Endothelial cell of umbilical vein (primary cell): ENCODE measurements at regions of chr9 and their contacts with region 1.

Region 1: GRCh38 chr9:94213511-94214124 is 45.5 kb upstream of the ZNF169 start:
- DNase-seq: peak; percentile 72
- H3K4me3 ChIP-seq: no peak overlapping the region
- H3K27ac ChIP-seq: no peak overlapping the region
- H3K4me1 ChIP-seq: peaks cover 2% of the 10 kb centered on the region
- H3K27me3 ChIP-seq: no peaks in the 10 kb centered on the region
- CTCF ChIP-seq: peak; percentile 69
- POLR2A ChIP-seq: no peak

Region 2: DNA sequence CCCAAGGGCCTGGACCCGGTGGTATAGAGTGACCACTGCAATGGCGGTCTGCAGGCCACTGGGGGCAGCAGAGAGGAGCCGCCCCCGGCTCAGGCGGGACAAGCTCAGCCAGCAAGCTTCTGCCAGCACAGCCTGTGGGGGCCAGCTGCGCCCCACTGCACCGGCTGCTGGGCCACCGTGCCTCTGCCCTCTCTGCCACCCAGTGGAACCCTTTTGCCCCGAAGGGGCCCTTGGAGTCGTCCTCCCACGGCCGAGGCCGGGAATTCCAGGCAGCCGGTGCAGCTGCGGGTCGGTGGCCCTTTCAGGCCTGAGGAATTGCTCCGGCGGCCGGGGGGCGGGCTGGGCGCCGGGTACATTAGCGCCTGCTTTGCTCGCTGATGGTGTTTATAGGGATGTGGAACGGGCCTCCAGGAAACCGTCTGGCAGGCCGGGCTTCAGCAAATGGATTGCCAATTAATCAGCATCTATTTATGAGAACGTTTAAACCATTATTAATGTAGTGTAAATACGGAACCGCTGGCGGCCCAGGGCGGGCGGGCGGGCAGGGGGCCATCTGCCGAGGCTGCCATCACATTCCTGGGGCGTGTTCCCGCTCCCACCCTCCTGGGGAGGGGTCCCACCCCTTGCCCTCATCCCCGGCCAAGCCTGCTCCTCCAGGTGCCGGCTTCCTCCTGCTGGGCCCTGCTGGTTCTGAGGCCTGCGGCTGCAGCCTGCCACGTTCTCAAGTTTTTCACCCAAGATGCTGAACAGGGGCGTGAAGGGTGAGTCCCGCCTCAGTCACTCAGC is 385.9 kb before region 1 on chr9:
- CTCF ChIA-PET with region 1: interaction called, 5 read pairs
- POLR2A ChIA-PET with region 1: no interaction called
- dilution Hi-C with region 1: no loop called
- intact Hi-C with region 1: loop called (anchors 1 kb)
- DNase-seq: peak; percentile 73
- H3K4me3 ChIP-seq: peak overlapping the region in 1 of 3 experiments; percentile 31
- H3K27ac ChIP-seq: no peak overlapping the region
- H3K4me1 ChIP-seq: no peaks in the 10 kb centered on the region
- H3K27me3 ChIP-seq: no peaks in the 10 kb centered on the region
- CTCF ChIP-seq: peak; percentile 90 to 95
- POLR2A ChIP-seq: no peak

Region 3: GRCh38 chr9:94014065-94014654 is 199.5 kb before region 1 on chr9:
- CTCF ChIA-PET with region 1: interaction called, 493 read pairs
- POLR2A ChIA-PET with region 1: no interaction called
- dilution Hi-C with region 1: no loop called
- intact Hi-C with region 1: loop called (anchors 1 kb)
- DNase-seq: peak; percentile 35
- H3K4me3 ChIP-seq: no peak overlapping the region
- H3K27ac ChIP-seq: no peak overlapping the region
- H3K4me1 ChIP-seq: peaks cover 3% of the 10 kb centered on the region
- H3K27me3 ChIP-seq: peaks cover 0 to 5% of the 10 kb centered on the region in 2 experiments
- CTCF ChIP-seq: peak; percentile 41 to 50
- POLR2A ChIP-seq: no peak

Region 4: DNA sequence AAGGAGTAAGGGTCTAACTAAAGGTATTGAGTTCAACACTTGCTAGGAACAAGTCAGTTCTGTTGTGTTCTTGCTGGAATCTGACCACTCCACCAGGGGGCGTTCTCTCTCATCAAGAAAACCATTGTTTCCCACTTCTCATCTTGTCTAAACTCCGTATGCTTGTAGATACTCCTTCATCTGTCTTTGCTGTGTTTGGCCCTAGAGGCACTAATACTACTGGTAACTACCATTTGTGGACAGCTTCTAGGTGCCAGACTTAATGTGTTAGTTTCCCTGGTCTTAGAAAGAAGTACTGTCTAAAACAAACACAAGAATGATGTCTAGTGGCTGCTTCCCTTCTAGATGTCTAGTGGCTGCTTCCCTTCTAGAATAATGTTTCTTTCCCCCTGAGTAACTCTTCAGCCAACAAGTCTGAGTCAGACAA is 148.1 kb before region 1 on chr9:
- CTCF ChIA-PET with region 1: interaction called, 243 read pairs
- POLR2A ChIA-PET with region 1: no interaction called
- dilution Hi-C with region 1: no loop called
- intact Hi-C with region 1: loop called (anchors 1 kb)
- DNase-seq: peak; percentile 89
- H3K4me3 ChIP-seq: no peak overlapping the region
- H3K27ac ChIP-seq: no peak overlapping the region
- H3K4me1 ChIP-seq: peaks cover 4% of the 10 kb centered on the region
- H3K27me3 ChIP-seq: no peaks in the 10 kb centered on the region
- CTCF ChIP-seq: peak; percentile 73 to 80
- POLR2A ChIP-seq: no peak

Region 5: GRCh38 chr9:94139672-94140417 is 73.8 kb before region 1 on chr9:
- CTCF ChIA-PET with region 1: interaction called, 10 read pairs
- POLR2A ChIA-PET with region 1: no interaction called
- dilution Hi-C with region 1: no loop called
- intact Hi-C with region 1: loop called (anchors 1 kb)
- DNase-seq: peak; percentile 96
- H3K4me3 ChIP-seq: no peak overlapping the region
- H3K27ac ChIP-seq: peak overlapping the region; percentile 87
- H3K4me1 ChIP-seq: peaks cover 24% of the 10 kb centered on the region
- H3K27me3 ChIP-seq: no peaks in the 10 kb centered on the region
- CTCF ChIP-seq: no peak
- POLR2A ChIP-seq: no peak

Region 6: DNA sequence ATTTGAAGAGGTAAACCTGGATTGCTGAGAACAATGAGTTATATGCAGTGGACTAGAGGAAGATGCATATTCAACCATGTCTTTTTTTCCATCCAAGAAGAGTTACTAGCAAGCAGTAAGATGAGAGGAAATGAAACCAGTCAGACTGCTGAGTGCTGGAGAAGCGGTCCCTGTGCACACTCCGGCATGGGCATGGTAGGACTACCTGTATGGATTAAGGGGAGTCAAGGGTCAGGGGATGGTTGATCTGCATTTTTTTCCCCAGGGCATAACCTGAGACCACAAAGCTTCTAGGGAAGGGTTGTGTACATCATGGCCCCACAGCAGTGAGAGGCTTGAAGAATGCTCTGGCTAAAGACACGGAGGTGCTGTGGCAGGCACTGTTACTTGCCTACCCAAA is 31.1 kb before region 1 on chr9:
- CTCF ChIA-PET with region 1: interaction called, 11 read pairs
- POLR2A ChIA-PET with region 1: no interaction called
- dilution Hi-C with region 1: no loop called
- intact Hi-C with region 1: no loop called
- DNase-seq: no peak
- H3K4me3 ChIP-seq: no peak overlapping the region
- H3K27ac ChIP-seq: no peak overlapping the region
- H3K4me1 ChIP-seq: no peaks in the 10 kb centered on the region
- H3K27me3 ChIP-seq: no peaks in the 10 kb centered on the region
- CTCF ChIP-seq: no peak
- POLR2A ChIP-seq: no peak

Region 7: GRCh38 chr9:94490465-94490864 is 276.8 kb after region 1 on chr9:
- CTCF ChIA-PET with region 1: no interaction called
- POLR2A ChIA-PET with region 1: no interaction called
- dilution Hi-C with region 1: no loop called
- intact Hi-C with region 1: no loop called
- DNase-seq: no peak
- H3K4me3 ChIP-seq: no peak overlapping the region
- H3K27ac ChIP-seq: no peak overlapping the region
- H3K4me1 ChIP-seq: no peaks in the 10 kb centered on the region
- H3K27me3 ChIP-seq: no peaks in the 10 kb centered on the region
- CTCF ChIP-seq: no peak
- POLR2A ChIP-seq: no peak

Region 8: GRCh38 chr9:94533155-94533554 is 319.5 kb after region 1 on chr9:
- CTCF ChIA-PET with region 1: no interaction called
- POLR2A ChIA-PET with region 1: no interaction called
- dilution Hi-C with region 1: no loop called
- intact Hi-C with region 1: no loop called
- DNase-seq: no peak
- H3K4me3 ChIP-seq: no peak overlapping the region
- H3K27ac ChIP-seq: no peak overlapping the region
- H3K4me1 ChIP-seq: no peaks in the 10 kb centered on the region
- H3K27me3 ChIP-seq: no peaks in the 10 kb centered on the region
- CTCF ChIP-seq: no peak
- POLR2A ChIP-seq: no peak

Region 9: GRCh38 chr9:94603259-94604160 is 389.9 kb after region 1 on chr9:
- CTCF ChIA-PET with region 1: no interaction called
- POLR2A ChIA-PET with region 1: no interaction called
- dilution Hi-C with region 1: no loop called
- intact Hi-C with region 1: loop called (anchors 10 kb)
- DNase-seq: peak; percentile 53
- H3K4me3 ChIP-seq: no peak overlapping the region
- H3K27ac ChIP-seq: no peak overlapping the region
- H3K4me1 ChIP-seq: no peaks in the 10 kb centered on the region
- H3K27me3 ChIP-seq: peaks cover 3% of the 10 kb centered on the region in 2 experiments
- CTCF ChIP-seq: peak; percentile 67 to 79
- POLR2A ChIP-seq: no peak